Spleen (tissue), 13 donors: ENCODE measurements at regions of chr7 and their contacts with region 1.

Region 1: GRCh38 chr7:20598459-20599309 is 16.8 kb upstream of the ABCB5 start:
- DNase-seq: no peak
- H3K4me3 ChIP-seq: no peak overlapping the region
- H3K27ac ChIP-seq: no peak overlapping the region
- H3K4me1 ChIP-seq: peaks cover 0 to 6% (median 3%) of the 10 kb centered on the region in 6 donors
- H3K27me3 ChIP-seq: peaks cover 0 to 17% (median 0%) of the 10 kb centered on the region in 7 donors
- CTCF ChIP-seq: peak; percentile 30 to 81 (median 74)
- POLR2A ChIP-seq: no peak

Region 2: GRCh38 chr7:19713676-19714075 is 885.0 kb before region 1 on chr7:
- intact Hi-C with region 1: loop called (anchors 2 kb)
- DNase-seq: no peak
- H3K4me3 ChIP-seq: no peak overlapping the region
- H3K27ac ChIP-seq: no peak overlapping the region
- H3K4me1 ChIP-seq: peaks cover 0 to 12% (median 8%) of the 10 kb centered on the region in 6 donors
- H3K27me3 ChIP-seq: peaks cover 0 to 5% (median 0%) of the 10 kb centered on the region in 7 donors
- CTCF ChIP-seq: peak in 10 of 11 experiments; percentile 26 to 72 (median 55)
- POLR2A ChIP-seq: no peak

Region 3: GRCh38 chr7:19747740-19748339 is 850.8 kb before region 1 on chr7:
- intact Hi-C with region 1: loop called (anchors 10 kb)
- DNase-seq: no peak
- H3K4me3 ChIP-seq: no peak overlapping the region
- H3K27ac ChIP-seq: no peak overlapping the region
- H3K4me1 ChIP-seq: no peaks in the 10 kb centered on the region
- H3K27me3 ChIP-seq: no peaks in the 10 kb centered on the region
- CTCF ChIP-seq: peak in 8 of 11 experiments; percentile 17 to 49 (median 38)
- POLR2A ChIP-seq: no peak

Region 4: DNA sequence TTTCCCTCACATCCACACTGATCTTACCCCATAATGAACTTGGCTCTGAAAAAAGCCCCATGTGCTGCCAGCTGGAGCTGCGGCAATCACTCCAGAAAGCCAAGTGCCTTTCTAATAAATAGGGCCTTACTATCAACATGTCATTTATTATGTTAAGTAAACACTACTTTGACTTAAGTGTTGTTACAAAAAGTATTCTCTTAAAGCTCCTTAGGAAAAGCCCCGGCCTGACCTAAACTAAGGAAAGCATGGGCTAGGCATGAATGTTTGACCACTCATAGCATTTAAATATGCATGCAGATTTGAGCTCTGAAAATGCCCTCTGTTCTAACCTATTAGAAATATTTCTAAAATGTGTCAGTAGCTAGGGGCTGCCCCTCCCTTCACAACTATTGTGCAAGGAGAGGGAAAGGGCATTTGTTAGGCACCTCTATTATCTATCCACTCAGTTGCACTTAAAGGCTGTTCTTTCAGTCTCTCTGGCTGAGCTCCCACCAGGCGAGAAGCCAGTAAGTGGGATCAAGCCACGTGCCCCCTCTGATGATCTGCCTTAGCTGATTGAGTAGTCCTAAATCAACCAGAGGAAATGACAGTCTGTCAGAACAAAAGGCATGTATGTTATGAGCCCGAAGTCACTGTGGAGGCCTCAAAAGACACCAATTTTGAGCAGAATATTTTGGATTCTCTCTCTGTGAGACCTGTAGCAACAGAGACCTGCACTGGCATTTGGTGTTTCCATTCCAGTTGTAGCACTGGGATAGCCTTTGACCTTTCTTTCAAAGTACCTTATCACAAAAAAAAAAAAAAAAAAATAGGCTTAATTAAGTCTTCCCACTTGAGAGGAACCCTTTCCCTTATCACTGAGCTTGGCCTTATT is 190.9 kb before region 1 on chr7:
- intact Hi-C with region 1: no loop called
- DNase-seq: no peak
- H3K4me3 ChIP-seq: no peak overlapping the region
- H3K27ac ChIP-seq: no peak overlapping the region
- H3K4me1 ChIP-seq: peaks cover 0 to 3% (median 0%) of the 10 kb centered on the region in 6 donors
- H3K27me3 ChIP-seq: peaks cover 0 to 12% (median 0%) of the 10 kb centered on the region in 7 donors
- CTCF ChIP-seq: no peak
- POLR2A ChIP-seq: no peak

Region 5: GRCh38 chr7:20647908-20648776 is 49.5 kb after region 1 on chr7:
- intact Hi-C with region 1: no loop called
- DNase-seq: no peak
- H3K4me3 ChIP-seq: no peak overlapping the region
- H3K27ac ChIP-seq: no peak overlapping the region
- H3K4me1 ChIP-seq: no peaks in the 10 kb centered on the region
- H3K27me3 ChIP-seq: peaks cover 0 to 27% (median 0%) of the 10 kb centered on the region in 7 donors
- CTCF ChIP-seq: no peak
- POLR2A ChIP-seq: no peak